ENCODE measurements at regions of chr10 and their contacts with region 1.

Region 1: DNA sequence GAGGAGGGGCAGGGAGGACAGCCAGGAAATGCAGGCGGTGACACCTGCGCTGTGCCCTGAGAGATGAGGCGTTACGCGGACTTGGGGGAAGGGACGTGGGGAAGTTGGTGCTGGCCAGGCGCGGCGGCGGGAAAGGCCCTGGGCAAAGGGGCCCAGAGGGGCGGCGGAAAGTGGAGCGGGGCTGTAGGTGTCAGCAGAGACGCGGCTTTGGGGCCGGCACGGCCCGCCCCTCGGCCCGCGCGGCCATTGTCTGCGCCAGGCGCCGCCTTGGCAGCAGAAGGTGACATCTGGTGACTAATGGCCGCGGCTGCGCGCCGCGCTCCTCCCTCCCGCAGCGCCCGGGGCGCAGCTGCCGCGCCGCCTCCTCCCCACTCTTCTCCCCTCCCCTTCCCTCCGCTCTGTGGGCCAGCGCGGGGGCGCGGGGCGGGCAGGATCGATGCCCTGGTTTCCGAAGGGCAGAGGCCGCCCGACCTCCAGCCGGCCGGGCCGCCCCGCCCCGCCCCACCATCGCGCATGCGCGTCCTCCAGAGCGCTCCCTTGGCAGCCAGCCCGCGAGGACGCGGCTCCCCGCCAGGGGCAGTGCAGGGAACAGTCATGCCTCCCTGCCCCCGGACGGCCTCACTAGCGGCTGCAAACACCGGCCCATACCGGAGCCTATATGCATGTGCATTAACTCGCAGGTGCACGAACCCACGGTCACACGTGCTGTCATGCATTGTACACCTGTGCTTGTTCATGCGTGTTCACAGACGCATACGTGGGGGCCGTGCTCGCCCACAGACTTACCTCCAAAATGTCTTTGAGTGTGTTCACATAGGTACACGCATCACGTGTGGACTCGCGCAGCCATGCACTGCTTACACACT is 269.6 kb downstream of the RPS24 start:
- DNase-seq: peak; percentile 97
- H3K4me3 ChIP-seq: peak overlapping the region; percentile 31 to 59 (median 44)
- H3K27ac ChIP-seq: peak overlapping the region; percentile 76
- H3K4me1 ChIP-seq: peaks cover 7% of the 10 kb centered on the region
- H3K27me3 ChIP-seq: peaks cover 8 to 11% of the 10 kb centered on the region in 2 experiments
- CTCF ChIP-seq: peak; percentile 69 to 87
- POLR2A ChIP-seq: peak; percentile 67

Region 2: GRCh38 chr10:78335691-78336401 is 32.6 kb after region 1 on chr10:
- CTCF ChIA-PET with region 1: interaction called, 12 read pairs
- POLR2A ChIA-PET with region 1: no interaction called
- dilution Hi-C with region 1: no loop called
- intact Hi-C with region 1: loop called (anchors 1 kb)
- DNase-seq: peak; percentile 87
- H3K4me3 ChIP-seq: no peak overlapping the region
- H3K27ac ChIP-seq: peak overlapping the region; percentile 73
- H3K4me1 ChIP-seq: peaks cover 20% of the 10 kb centered on the region
- H3K27me3 ChIP-seq: no peaks in the 10 kb centered on the region
- CTCF ChIP-seq: no peak
- POLR2A ChIP-seq: peak; percentile 71

Region 3: GRCh38 chr10:78437998-78438906 is 135.0 kb after region 1 on chr10:
- CTCF ChIA-PET with region 1: no interaction called
- POLR2A ChIA-PET with region 1: no interaction called
- dilution Hi-C with region 1: no loop called
- intact Hi-C with region 1: loop called (anchors 2 kb)
- DNase-seq: no peak
- H3K4me3 ChIP-seq: no peak overlapping the region
- H3K27ac ChIP-seq: no peak overlapping the region
- H3K4me1 ChIP-seq: peaks cover 9% of the 10 kb centered on the region
- H3K27me3 ChIP-seq: no peaks in the 10 kb centered on the region
- CTCF ChIP-seq: peak in 1 of 2 donors; percentile 4
- POLR2A ChIP-seq: no peak

Region 4: GRCh38 chr10:78520737-78521430 is 217.7 kb after region 1 on chr10:
- CTCF ChIA-PET with region 1: no interaction called
- POLR2A ChIA-PET with region 1: no interaction called
- dilution Hi-C with region 1: no loop called
- intact Hi-C with region 1: loop called (anchors 1 kb)
- DNase-seq: peak; percentile 46
- H3K4me3 ChIP-seq: no peak overlapping the region
- H3K27ac ChIP-seq: no peak overlapping the region
- H3K4me1 ChIP-seq: no peaks in the 10 kb centered on the region
- H3K27me3 ChIP-seq: peaks cover 0 to 1% of the 10 kb centered on the region in 2 experiments
- CTCF ChIP-seq: peak in 1 of 2 donors; percentile 37
- POLR2A ChIP-seq: no peak